ENCODE measurements at regions of chr11 and their contacts with region 1.

Region 1: DNA sequence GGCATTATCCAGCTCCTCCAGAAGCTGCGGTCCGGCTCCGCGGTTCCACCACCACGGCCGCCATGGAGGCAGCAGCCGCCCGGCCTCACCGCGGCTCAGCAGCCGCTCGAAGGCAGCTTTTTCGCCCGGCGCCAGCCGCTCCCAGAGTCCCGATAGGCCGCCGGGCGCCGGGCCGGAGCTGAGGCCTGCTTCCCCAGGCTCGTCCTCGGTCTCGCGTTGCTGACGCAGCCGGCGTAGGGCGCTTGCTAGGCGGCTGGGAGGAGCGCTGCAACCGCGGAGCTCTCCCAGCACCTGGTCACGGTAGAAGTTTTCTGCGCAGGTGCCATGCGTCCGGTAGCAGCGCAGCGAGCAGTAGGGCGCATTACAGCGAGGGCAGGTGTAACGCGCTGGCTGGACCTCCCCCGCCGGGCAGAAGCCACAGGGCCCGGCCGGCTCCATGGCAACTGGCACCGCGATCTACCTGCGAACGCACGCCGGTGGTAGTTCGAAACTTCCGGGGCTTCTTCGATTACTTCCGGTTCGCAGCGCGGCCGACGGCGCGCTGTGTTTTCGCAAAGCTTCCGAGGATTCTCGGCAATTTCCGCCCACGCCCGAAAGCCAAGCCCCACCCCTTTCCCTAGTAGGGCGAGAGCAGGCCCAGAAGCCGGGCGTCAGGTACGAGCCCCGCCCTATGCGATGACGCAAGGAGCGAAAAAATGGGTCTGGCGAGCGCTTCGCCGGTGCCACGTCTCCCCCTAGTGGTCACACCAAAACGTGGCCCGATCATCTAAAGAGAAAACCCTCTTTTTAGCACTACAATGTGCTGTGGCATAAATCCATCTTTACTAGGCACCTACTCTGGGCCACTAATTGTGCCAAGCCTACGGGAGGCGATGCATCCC is at the start of gene ZNHIT2:
- DNase-seq: peak; percentile 100
- ATAC-seq: peak; percentile 74
- H3K4me3 ChIP-seq: peak within 1 kb of the TSS; percentile 0 to 80 (median 80)
- H3K4me3 Mint-ChIP-seq: peak within 1 kb of the TSS; percentile 91
- H3K27ac ChIP-seq: peak within 1 kb of the TSS; percentile 69 to 96
- H3K27ac Mint-ChIP-seq: peak within 1 kb of the TSS; percentile 91
- H3K4me1 ChIP-seq: peaks cover 38 to 60% of the 10 kb centered on the region in 2 donors
- H3K4me1 Mint-ChIP-seq: peaks cover 71% of the 10 kb centered on the region
- H3K27me3 ChIP-seq: no peaks in the 10 kb centered on the region
- H3K27me3 Mint-ChIP-seq: no peaks in the 10 kb centered on the region
- CTCF ChIP-seq: peak; percentile 92
- total RNA-seq, gene ZNHIT2: 14.1 and 14.5 TPM in 2 replicates

Region 2: DNA sequence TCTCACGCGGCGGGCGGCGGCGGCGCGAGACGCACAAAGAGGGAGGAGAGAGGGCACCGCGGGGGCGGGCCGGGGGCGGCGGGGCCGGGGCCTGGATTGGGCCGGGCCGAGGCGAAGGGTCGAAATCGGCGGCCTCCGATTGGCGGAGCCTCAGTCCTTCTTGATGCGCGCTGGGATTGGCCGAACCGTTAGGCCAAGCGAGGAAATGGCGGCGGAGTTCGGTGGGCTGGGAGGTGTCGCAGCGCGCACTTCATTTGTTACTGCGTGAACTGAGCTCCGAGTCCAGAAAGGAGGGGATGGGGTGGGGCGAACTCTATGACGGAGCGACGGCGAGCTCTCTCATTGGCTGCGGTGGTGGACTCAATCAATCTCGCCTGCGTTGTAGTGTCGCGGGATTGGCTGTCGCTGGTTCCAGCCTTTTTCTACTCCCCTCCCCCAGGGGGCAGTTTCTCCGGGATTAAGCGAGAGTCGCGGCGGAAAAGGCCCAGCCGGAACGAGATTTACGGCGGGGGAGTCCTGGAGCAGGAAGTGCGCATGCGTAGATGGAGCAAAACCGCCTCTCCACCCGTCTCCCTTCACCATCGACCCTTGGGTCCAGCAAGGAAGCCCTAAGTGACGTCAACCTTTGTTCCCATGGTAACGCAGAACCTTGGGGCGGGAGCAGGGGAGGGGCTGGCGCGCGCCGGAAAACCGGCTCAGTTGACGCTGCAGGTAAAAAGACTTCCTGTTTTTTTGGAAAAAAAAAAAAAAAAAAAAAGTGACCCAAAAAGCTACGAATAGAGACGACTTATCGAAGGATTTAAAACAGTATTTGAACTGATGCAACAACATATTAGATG is 338.7 kb before region 1 on chr11 and contains the start of gene SF1:
- CTCF ChIA-PET with region 1: no interaction called
- POLR2A ChIA-PET with region 1: interaction called, 4 read pairs
- intact Hi-C with region 1: loop called (anchors 5 kb)
- DNase-seq: peak; percentile 100
- ATAC-seq: peak; percentile 82
- H3K4me3 ChIP-seq: peak within 1 kb of the TSS; percentile 79 to 92 (median 82)
- H3K4me3 Mint-ChIP-seq: peak within 1 kb of the TSS; percentile 95
- H3K27ac ChIP-seq: peak within 1 kb of the TSS; percentile 95 to 98
- H3K27ac Mint-ChIP-seq: peak within 1 kb of the TSS; percentile 99
- H3K4me1 ChIP-seq: peaks cover 60 to 71% of the 10 kb centered on the region in 2 donors
- H3K4me1 Mint-ChIP-seq: peaks cover 73% of the 10 kb centered on the region
- H3K27me3 ChIP-seq: no peaks in the 10 kb centered on the region
- H3K27me3 Mint-ChIP-seq: no peaks in the 10 kb centered on the region
- CTCF ChIP-seq: no peak
- total RNA-seq, gene SF1: 914 and 931 TPM in 2 replicates

Region 3: DNA sequence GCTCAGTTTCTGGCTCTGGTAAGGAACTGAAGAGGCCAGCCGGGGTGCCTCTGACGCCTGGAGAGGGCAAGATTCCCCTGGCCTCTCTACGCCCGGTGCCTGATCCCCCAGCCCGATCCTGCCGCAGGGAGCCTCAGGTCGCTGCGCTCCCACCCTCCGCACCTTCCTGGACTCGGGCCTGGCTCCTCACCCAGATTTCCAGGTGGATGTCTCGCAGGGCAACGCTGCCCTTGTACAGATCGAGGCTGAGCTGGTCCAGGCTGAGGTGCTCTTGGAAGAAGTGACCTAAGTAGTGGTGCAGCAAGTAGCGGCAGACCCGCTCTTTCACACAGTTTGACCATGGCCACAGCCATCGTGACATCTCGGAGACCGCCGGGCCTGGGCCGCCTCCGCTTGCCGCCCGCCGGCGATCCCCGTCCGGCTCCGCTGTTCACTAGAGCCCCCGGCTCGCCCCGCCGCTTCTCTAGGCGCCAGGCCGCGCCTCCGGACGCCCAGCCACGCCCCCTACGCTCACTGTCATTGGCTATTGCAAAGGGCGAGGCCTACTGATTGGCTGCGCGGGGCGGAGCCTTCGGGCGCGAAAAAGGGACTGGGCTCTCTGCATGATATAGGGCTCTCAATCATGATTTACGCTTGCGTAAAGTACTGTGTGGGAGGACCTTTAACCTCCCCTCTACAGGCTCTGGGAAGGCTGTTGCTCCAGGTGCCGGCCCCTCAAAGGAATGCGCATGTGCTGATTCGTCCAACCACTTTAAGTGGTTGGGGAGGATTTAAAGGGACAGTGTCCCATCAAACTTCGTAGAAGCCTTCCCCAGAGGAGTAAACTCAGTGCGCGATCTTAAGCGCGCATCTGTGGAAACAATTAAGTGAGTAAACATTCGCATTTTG is 200.4 kb before region 1 on chr11 and contains the start of gene ATG2A:
- CTCF ChIA-PET with region 1: no interaction called
- POLR2A ChIA-PET with region 1: no interaction called
- intact Hi-C with region 1: loop called (anchors 10 kb)
- DNase-seq: peak; percentile 99
- ATAC-seq: peak; percentile 97
- H3K4me3 ChIP-seq: peak within 1 kb of the TSS; percentile 86 to 96 (median 90)
- H3K4me3 Mint-ChIP-seq: peak within 1 kb of the TSS; percentile 88
- H3K27ac ChIP-seq: peak within 1 kb of the TSS; percentile 44 to 84
- H3K27ac Mint-ChIP-seq: peak within 1 kb of the TSS; percentile 91
- H3K4me1 ChIP-seq: peaks cover 19 to 33% of the 10 kb centered on the region in 2 donors
- H3K4me1 Mint-ChIP-seq: peaks cover 34% of the 10 kb centered on the region
- H3K27me3 ChIP-seq: no peaks in the 10 kb centered on the region
- H3K27me3 Mint-ChIP-seq: no peaks in the 10 kb centered on the region
- CTCF ChIP-seq: no peak
- total RNA-seq, gene ATG2A: 38.6 and 43.4 TPM in 2 replicates

Region 4: DNA sequence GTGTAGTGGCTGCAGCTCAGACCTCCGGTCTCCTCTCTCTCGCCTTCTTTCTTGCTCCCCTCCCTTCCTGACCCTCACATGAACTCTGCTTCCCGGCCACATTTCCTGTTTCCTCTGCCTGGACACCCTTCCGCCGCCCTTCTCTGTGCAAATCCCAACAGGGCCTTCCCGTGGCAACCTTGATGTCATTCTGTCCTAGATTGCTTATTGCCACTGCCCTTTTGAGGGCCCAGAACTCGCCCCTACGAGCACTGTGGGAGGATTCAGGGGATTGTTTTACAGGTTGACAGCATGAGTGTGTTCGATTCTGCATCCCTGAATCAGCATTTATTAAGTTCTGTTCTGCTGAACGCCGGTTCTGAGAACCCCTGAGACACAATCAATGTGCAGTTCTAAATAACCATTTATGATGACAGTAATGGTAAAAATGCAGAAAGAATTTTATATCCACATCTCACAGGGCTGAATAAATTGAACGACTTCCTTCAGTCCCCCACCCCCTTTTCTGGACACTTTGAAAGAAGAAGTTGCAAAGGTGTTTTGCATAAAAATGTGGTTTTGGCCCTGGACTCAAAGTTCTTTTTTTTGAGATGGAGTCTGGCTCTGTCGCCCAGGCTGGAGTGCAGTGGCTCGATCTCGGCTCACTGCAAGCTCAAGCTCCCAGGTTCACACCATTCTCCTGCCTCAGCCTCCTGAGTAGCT is 127.1 kb before region 1 on chr11:
- CTCF ChIA-PET with region 1: no interaction called
- POLR2A ChIA-PET with region 1: no interaction called
- intact Hi-C with region 1: no loop called
- DNase-seq: peak; percentile 65
- ATAC-seq: peak; percentile 61
- H3K4me3 ChIP-seq: peak overlapping the region; percentile 14 to 62 (median 17)
- H3K4me3 Mint-ChIP-seq: peak overlapping the region; percentile 69
- H3K27ac ChIP-seq: peak overlapping the region in 1 of 2 donors; percentile 26
- H3K27ac Mint-ChIP-seq: peak overlapping the region; percentile 77
- H3K4me1 ChIP-seq: peaks cover 38 to 50% of the 10 kb centered on the region in 2 donors
- H3K4me1 Mint-ChIP-seq: peaks cover 45% of the 10 kb centered on the region
- H3K27me3 ChIP-seq: no peaks in the 10 kb centered on the region
- H3K27me3 Mint-ChIP-seq: no peaks in the 10 kb centered on the region
- CTCF ChIP-seq: no peak

Region 5: DNA sequence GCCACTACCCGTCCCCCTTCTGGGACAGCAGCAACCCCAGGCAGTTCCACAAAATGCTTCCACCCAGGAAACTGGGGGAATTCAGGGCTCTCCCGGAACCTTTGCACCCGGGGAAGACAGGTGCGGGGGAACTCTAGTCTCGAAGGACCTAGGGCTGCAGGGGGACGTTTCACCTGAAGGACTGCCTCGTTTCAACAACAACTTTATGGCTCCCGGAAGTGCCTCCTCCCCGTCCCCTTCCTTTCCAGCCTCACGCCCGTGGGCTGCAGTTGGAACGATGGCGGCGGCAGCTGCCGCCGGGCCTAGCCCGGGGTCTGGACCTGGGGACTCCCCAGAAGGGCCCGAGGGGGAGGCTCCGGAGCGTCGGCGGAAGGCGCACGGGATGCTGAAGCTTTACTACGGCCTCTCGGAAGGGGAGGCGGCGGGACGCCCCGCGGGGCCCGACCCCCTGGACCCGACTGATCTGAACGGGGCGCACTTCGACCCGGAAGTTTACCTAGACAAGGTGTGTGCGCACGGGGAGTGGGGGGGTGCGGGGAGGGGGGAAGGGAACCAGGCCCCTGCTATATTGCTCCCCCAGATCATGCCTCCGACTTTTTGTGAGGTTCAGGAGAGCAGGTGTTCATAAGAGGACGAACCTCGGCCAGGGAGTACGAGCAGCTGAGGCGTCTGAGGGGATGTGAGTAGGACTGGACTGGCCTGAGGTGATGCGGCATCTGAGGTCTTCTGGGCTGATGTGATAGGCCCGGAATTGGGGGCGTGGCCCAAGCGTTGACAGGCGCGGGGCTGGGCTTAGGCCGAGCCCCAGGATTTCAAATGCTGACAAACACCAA is 21.3 kb before region 1 on chr11 and contains the start of gene VPS51:
- CTCF ChIA-PET with region 1: interaction called, 96 read pairs
- POLR2A ChIA-PET with region 1: interaction called, 7 read pairs
- intact Hi-C with region 1: loop called (anchors 1 kb)
- DNase-seq: peak; percentile 93
- ATAC-seq: peak; percentile 86
- H3K4me3 ChIP-seq: peak within 1 kb of the TSS; percentile 69 to 90 (median 77)
- H3K4me3 Mint-ChIP-seq: peak within 1 kb of the TSS; percentile 96
- H3K27ac ChIP-seq: peak within 1 kb of the TSS; percentile 77 to 81
- H3K27ac Mint-ChIP-seq: peak within 1 kb of the TSS; percentile 97
- H3K4me1 ChIP-seq: peaks cover 10 to 16% of the 10 kb centered on the region in 2 donors
- H3K4me1 Mint-ChIP-seq: peaks cover 24% of the 10 kb centered on the region
- H3K27me3 ChIP-seq: no peaks in the 10 kb centered on the region
- H3K27me3 Mint-ChIP-seq: no peaks in the 10 kb centered on the region
- CTCF ChIP-seq: no peak
- total RNA-seq, gene VPS51: 223 and 225 TPM in 2 replicates

Region 6: GRCh38 chr11:65134386-65135253 is 17.2 kb after region 1 on chr11 and contains the start of gene SYVN1:
- CTCF ChIA-PET with region 1: interaction called, 41 read pairs
- POLR2A ChIA-PET with region 1: interaction called, 160 read pairs
- intact Hi-C with region 1: loop called (anchors 1 kb)
- DNase-seq: peak; percentile 97
- ATAC-seq: peak; percentile 64
- H3K4me3 ChIP-seq: peak within 1 kb of the TSS; percentile 81 to 99 (median 96)
- H3K4me3 Mint-ChIP-seq: peak within 1 kb of the TSS; percentile 97
- H3K27ac ChIP-seq: peak within 1 kb of the TSS; percentile 98 to 99
- H3K27ac Mint-ChIP-seq: peak within 1 kb of the TSS; percentile 99
- H3K4me1 ChIP-seq: peaks cover 36 to 57% of the 10 kb centered on the region in 2 donors
- H3K4me1 Mint-ChIP-seq: peaks cover 66% of the 10 kb centered on the region
- H3K27me3 ChIP-seq: no peaks in the 10 kb centered on the region
- H3K27me3 Mint-ChIP-seq: no peaks in the 10 kb centered on the region
- CTCF ChIP-seq: no peak
- total RNA-seq, gene SYVN1: 187 and 188 TPM in 2 replicates

Region 7: DNA sequence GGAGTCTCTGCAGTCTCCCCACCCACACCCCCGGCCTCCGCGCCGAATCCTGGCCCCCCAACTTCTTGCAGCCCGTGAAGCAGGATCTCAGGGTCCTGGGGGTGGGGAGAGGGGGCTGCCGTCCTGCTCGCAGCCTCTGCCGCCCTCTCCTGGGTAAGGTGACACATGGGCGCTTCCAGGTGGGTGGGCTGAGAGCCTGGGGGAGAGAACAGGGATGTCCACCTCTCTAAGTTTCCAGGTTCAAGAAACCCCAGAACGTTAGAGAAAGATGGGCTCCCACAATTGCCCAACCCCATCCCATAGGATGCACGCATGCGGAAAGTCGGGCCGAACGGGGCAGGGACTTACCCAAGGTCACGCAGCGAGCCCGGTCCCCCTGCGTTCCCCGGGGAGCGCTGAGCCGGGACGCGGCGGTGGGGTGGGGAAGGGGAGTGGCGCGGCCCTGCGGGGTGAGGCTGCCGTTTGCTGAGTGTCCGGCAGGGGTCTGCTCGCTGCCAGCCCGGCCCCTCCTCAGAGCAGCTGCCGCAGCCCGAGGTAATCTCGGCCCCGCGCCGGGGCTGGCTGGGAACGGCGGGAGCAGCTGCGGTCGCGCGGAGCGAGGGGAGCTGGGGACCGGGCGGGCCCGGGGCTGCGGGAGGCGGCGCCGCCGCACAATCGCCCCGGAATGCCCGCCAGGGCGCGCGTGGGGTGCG is 63.6 kb after region 1 on chr11:
- CTCF ChIA-PET with region 1: interaction called, 118 read pairs
- POLR2A ChIA-PET with region 1: interaction called, 27 read pairs
- intact Hi-C with region 1: no loop called
- DNase-seq: peak; percentile 87
- ATAC-seq: peak; percentile 84
- H3K4me3 ChIP-seq: peak overlapping the region; percentile 58 to 91 (median 80)
- H3K4me3 Mint-ChIP-seq: peak overlapping the region; percentile 97
- H3K27ac ChIP-seq: peak overlapping the region; percentile 58 to 64
- H3K27ac Mint-ChIP-seq: peak overlapping the region; percentile 96
- H3K4me1 ChIP-seq: peaks cover 16 to 24% of the 10 kb centered on the region in 2 donors
- H3K4me1 Mint-ChIP-seq: peaks cover 24% of the 10 kb centered on the region
- H3K27me3 ChIP-seq: no peaks in the 10 kb centered on the region
- H3K27me3 Mint-ChIP-seq: no peaks in the 10 kb centered on the region
- CTCF ChIP-seq: peak; percentile 61